Transverse colon (tissue), 4 donors: ENCODE measurements at regions of chr7 and their contacts with region 1.

Region 1: DNA sequence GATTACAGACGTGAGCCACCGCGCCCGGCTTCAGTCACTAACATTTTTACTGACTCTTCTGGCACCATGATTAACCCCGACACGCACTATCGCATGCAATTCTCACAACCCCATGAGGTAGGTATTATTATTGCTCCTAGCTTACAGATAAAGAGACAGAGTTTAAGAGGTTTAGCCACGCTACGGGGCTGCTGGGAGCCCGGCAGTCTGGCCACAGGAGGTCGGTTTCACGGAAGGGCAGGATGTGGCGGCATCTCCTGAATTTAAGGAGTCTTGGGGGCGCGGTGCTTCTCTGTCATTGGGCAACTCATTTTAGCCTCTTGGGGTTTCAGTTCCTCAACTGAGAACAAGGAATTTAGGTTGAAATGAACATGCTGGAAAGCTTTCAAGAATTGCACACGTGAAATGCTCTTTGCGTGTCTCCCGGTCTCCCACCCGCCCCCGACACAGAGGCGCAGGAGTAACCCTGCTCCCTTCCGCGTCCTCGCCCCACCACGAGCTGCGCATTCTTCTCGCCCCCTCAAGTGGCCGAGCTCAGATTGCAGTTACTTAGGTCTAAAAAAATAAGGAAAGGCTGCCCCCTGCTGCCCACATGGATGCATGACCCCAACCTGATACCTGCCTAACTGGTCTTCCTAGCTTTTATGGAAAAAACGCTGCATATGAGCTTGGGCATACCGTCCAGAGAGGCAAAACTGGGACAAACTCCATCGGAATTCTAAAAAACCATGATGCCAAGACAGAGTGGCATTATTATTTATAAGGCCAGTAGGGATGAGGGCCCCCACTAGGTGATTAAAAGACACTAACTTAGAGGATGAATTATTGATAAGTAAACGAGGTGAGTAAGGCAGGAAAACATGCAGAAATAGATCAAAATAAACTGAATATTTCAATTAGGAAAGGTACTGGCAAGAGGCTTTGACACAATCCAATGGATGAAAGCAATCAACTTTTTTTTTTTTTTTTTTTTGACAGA is 12.4 kb downstream of the PRSS2 start:
- DNase-seq: peak; percentile 90
- H3K4me3 ChIP-seq: peak overlapping the region in 3 of 4 donors; percentile 0 to 32 (median 16)
- H3K27ac ChIP-seq: no peak overlapping the region
- H3K4me1 ChIP-seq: peaks cover 0 to 4% (median 0%) of the 10 kb centered on the region in 4 donors
- H3K27me3 ChIP-seq: peaks cover 9% of the 10 kb centered on the region
- CTCF ChIP-seq: peak; percentile 88 to 96 (median 92)
- EP300 ChIP-seq: no peak
- POLR2A ChIP-seq: no peak

Region 2: DNA sequence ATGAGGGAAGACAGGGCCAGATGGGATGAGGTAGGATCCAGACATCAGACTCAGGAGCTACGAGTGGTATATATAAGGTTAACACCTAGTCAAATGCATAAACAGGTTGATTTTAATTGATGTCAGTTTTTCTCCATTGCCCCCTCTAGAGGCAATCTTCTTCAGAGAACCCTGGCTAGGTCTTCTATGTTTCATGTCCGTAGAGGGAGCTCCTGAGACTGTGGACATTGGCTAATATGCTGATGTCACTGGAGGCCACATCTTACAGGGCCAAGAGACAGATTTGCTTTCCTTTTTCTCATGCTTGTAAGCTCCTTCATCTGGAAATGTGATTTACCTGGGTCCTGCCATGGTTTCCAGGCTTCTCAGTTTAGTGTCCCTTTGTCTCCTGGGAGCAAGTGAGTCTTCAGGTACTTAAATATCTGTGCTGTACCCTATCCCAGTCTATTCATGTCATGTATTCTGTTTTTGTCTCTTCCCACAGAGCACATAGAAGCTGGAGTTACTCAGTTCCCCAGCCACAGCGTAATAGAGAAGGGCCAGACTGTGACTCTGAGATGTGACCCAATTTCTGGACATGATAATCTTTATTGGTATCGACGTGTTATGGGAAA is 195.5 kb before region 1 on chr7:
- in situ Hi-C with region 1: no loop called
- intact Hi-C with region 1: no loop called
- DNase-seq: no peak
- H3K4me3 ChIP-seq: no peak overlapping the region
- H3K27ac ChIP-seq: no peak overlapping the region
- H3K4me1 ChIP-seq: peaks cover 0 to 10% (median 3%) of the 10 kb centered on the region in 4 donors
- H3K27me3 ChIP-seq: no peaks in the 10 kb centered on the region
- CTCF ChIP-seq: peak in 3 of 5 experiments; percentile 20 to 25 (median 24)
- EP300 ChIP-seq: no peak
- POLR2A ChIP-seq: no peak

Region 3: DNA sequence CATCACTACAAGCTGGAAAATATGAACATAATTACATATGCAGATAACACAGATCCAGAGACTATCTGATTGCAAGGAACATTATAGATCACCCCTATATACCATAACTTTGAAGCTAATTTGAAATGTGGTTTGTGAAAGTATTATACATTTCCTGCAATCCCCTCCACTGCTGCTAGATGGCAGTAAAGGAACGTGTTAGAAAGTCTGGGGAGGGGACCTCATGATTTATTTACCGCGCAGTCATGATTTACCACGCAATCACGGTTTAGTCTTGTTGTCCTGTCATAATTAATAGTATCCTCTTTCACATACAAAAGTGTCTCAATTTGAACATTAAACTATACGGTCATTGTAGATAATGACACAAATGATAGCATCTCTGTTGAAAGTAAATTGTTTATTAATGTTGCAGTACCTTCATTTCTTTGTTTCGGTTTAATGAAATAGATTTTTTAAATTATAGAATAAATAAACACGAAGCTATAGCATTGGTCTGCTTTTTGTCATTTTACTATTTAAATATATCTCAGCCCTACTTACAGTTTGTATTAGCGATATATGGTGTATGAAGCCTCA is 179.3 kb before region 1 on chr7:
- in situ Hi-C with region 1: no loop called
- intact Hi-C with region 1: loop called (anchors 10 kb)
- DNase-seq: peak; percentile 37
- H3K4me3 ChIP-seq: no peak overlapping the region
- H3K27ac ChIP-seq: no peak overlapping the region
- H3K4me1 ChIP-seq: no peaks in the 10 kb centered on the region
- H3K27me3 ChIP-seq: peaks cover 12% of the 10 kb centered on the region
- CTCF ChIP-seq: peak; percentile 56 to 74 (median 72)
- EP300 ChIP-seq: no peak
- POLR2A ChIP-seq: no peak

Region 4: GRCh38 chr7:142886477-142887265 is 103.5 kb after region 1 on chr7:
- in situ Hi-C with region 1: no loop called
- intact Hi-C with region 1: no loop called
- DNase-seq: no peak
- H3K4me3 ChIP-seq: no peak overlapping the region
- H3K27ac ChIP-seq: no peak overlapping the region
- H3K4me1 ChIP-seq: no peaks in the 10 kb centered on the region
- H3K27me3 ChIP-seq: no peaks in the 10 kb centered on the region
- CTCF ChIP-seq: no peak
- EP300 ChIP-seq: no peak
- POLR2A ChIP-seq: no peak